ENCODE measurements at regions of chr20 and their contacts with region 1.

Region 1: GRCh38 chr20:32521780-32522525 is 63.2 kb downstream of the NOL4L start:
- DNase-seq: peak; percentile 72
- ATAC-seq: peak; percentile 67
- H3K4me3 Mint-ChIP-seq: no peak overlapping the region
- H3K27ac Mint-ChIP-seq: peak overlapping the region; percentile 83
- H3K4me1 Mint-ChIP-seq: peaks cover 57% of the 10 kb centered on the region
- H3K27me3 Mint-ChIP-seq: no peaks in the 10 kb centered on the region
- CTCF ChIP-seq: peak; percentile 94

Region 2: DNA sequence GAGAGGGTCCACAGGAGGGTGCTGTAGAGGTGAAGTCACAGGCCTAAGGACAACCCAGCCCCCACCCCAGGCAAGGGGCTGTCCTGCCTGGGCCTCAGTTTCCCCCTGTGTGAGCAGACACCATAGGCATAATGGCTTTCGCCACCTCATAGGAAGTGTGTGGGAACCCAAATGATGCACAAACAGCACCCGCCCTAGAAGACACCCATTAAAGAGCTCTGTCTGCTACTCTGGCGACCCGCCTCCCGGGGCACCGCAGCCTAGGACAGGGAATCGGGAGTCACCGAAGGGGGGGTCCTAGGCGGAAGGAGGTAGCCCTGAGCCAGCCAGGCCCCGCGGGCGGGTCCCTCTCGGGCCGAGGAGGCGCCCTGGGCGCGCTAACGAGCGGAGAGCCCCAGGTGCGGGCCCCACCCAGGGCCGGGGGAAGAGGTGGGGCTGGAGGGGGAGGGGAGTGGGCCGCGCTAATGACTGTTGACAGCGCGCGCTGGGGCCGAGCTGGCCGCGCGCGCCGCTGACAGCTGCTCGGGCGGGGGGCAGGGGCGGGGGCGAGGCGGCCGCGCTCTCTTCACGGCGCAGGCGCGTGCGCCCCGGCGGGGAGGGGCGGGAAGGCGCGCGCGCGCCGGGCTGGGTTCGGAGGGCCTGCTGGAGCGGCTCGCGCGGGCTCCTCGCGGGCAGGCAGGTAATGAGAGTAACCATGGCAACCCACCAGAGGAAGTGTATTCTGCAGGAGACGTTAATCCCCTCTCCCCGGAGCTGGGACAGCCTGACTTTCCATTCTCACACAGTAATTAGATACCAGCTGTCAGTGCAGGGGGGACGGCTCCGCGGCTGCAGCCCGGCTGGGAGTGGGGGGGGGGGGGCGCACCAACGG is 14.2 kb after region 1 on chr20:
- CTCF ChIA-PET with region 1: interaction called, 88 read pairs
- POLR2A ChIA-PET with region 1: interaction called, 90 read pairs
- intact Hi-C with region 1: no loop called
- DNase-seq: peak; percentile 85
- ATAC-seq: peak; percentile 40
- H3K4me3 Mint-ChIP-seq: peak overlapping the region; percentile 67
- H3K27ac Mint-ChIP-seq: peak overlapping the region; percentile 90
- H3K4me1 Mint-ChIP-seq: peaks cover 81% of the 10 kb centered on the region
- H3K27me3 Mint-ChIP-seq: no peaks in the 10 kb centered on the region
- CTCF ChIP-seq: no peak

Region 3: DNA sequence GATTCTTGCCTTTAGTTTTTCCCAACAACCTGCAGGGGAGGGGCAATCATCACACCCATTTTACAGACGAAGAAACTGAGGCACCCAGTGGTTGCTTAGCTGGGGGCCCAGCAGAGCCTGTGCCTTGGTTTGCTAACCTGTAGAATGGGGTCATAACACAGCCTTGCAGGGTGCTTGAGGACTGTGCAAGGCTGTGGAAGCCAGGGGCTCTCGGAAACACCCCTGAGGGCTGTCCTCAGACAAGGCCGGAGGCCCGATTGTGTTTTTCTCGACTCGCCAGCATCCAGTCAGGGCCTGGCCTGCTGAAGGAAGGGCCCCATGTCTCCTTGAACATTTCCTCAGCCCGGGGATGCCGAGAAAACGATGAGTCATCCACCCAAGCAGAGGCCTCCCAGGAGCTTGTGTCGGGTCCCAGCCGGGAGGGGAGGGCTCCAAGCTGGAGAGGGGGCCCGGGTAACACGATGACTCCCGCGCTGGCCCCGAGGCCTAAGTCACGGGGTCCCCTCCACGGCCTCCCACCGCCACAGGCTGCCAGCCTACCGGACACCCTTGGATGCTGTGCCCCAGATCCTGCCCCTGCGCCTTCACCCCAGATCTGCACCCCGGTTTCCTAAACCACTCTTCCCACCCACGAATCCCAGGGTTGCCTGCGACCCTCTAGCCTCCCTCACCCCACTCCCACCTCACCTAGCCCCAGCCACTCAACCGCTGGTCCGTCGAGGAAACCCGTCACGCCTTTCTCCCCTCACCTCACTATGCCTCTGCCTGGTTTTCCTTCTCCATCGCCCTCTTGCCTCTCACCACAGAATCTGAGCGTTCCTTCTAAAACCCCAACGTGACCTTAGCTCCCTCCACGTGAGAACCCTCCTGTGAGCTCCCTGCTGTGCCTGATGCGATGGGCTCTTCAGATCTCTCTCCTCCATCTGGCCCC is 52.6 kb after region 1 on chr20:
- CTCF ChIA-PET with region 1: interaction called, 11 read pairs
- POLR2A ChIA-PET with region 1: no interaction called
- intact Hi-C with region 1: no loop called
- DNase-seq: peak; percentile 65
- ATAC-seq: peak; percentile 68
- H3K4me3 Mint-ChIP-seq: no peak overlapping the region
- H3K27ac Mint-ChIP-seq: no peak overlapping the region
- H3K4me1 Mint-ChIP-seq: peaks cover 46% of the 10 kb centered on the region
- H3K27me3 Mint-ChIP-seq: no peaks in the 10 kb centered on the region
- CTCF ChIP-seq: no peak

Region 4: GRCh38 chr20:32626859-32627636 is 105.1 kb after region 1 on chr20:
- CTCF ChIA-PET with region 1: interaction called, 15 read pairs
- POLR2A ChIA-PET with region 1: interaction called, 4 read pairs
- intact Hi-C with region 1: no loop called
- DNase-seq: peak; percentile 22
- ATAC-seq: peak; percentile 25
- H3K4me3 Mint-ChIP-seq: peak overlapping the region; percentile 29
- H3K27ac Mint-ChIP-seq: peak overlapping the region; percentile 75
- H3K4me1 Mint-ChIP-seq: peaks cover 14% of the 10 kb centered on the region
- H3K27me3 Mint-ChIP-seq: no peaks in the 10 kb centered on the region
- CTCF ChIP-seq: no peak

Region 5: DNA sequence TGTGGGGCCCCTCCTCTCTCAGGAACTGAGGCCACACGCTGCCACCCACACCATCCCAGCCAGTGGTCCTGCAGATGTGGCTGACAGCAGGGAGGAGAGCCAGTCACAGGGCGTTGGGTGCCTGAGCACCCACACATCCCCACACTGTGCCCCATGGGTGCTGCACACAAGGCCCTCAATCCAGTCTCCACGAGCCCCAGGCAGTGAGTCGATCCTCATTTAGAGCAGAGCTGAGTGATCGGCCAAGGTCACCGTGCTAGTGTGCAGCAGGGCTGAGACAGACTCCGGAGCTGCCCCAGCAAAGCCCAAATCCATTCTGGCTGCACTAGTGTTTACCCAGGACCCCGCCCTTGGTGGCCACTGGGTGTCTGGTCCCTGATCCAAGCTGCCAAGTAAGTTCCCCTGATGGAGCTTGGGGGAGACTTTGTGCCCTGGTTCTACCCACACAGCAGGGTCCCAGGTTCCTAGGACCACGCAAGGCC is 142.8 kb after region 1 on chr20:
- CTCF ChIA-PET with region 1: interaction called, 17 read pairs
- POLR2A ChIA-PET with region 1: no interaction called
- intact Hi-C with region 1: no loop called
- DNase-seq: peak; percentile 27
- ATAC-seq: peak; percentile 72
- H3K4me3 Mint-ChIP-seq: no peak overlapping the region
- H3K27ac Mint-ChIP-seq: no peak overlapping the region
- H3K4me1 Mint-ChIP-seq: peaks cover 6% of the 10 kb centered on the region
- H3K27me3 Mint-ChIP-seq: no peaks in the 10 kb centered on the region
- CTCF ChIP-seq: no peak